PC-9 (cell line): ENCODE measurements at regions of chr3 and their contacts with region 1.

Region 1: DNA sequence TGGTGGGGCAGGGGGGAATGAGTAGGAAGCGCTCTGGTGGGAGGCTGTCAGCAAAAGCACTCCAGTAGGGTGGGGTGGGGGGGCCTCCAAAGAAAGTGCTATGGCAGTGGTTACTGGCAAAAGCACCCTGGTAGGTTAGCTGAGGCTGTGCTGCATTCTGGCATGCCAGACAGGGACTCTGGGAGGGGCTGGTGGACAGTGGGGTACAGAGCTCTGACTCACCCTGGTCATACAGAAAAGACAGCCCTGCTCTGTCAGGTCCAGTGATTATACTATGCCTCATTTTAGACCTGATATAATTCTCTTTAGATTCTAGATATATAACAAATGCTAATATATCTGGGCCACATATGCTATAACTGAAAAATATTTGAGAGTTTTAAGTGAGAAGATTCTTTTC is 82.8 kb upstream of the CPNE4 start:
- DNase-seq: no peak
- H3K4me3 ChIP-seq: no peak overlapping the region
- H3K27ac ChIP-seq: no peak overlapping the region
- H3K4me1 ChIP-seq: peaks cover 10% of the 10 kb centered on the region; the same call in 1 of the 2 replicates
- H3K27me3 ChIP-seq: no peaks in the 10 kb centered on the region
- CTCF ChIP-seq: no peak

Region 2: GRCh38 chr3:132283440-132283839 is 165.8 kb after region 1 on chr3:
- CTCF ChIA-PET with region 1: no interaction called
- POLR2A ChIA-PET with region 1: interaction called, 13 read pairs
- intact Hi-C with region 1: no loop called
- DNase-seq: peak; percentile 14 to 59
- H3K4me3 ChIP-seq: no peak overlapping the region
- H3K27ac ChIP-seq: no peak overlapping the region
- H3K4me1 ChIP-seq: peaks cover 12% of the 10 kb centered on the region; the same call in 1 of the 2 replicates
- H3K27me3 ChIP-seq: no peaks in the 10 kb centered on the region
- CTCF ChIP-seq: no peak